Naive thymus-derived CD8-positive, alpha-beta T cell (primary cell): ENCODE measurements at regions of chr10 and their contacts with region 1.

Region 1: DNA sequence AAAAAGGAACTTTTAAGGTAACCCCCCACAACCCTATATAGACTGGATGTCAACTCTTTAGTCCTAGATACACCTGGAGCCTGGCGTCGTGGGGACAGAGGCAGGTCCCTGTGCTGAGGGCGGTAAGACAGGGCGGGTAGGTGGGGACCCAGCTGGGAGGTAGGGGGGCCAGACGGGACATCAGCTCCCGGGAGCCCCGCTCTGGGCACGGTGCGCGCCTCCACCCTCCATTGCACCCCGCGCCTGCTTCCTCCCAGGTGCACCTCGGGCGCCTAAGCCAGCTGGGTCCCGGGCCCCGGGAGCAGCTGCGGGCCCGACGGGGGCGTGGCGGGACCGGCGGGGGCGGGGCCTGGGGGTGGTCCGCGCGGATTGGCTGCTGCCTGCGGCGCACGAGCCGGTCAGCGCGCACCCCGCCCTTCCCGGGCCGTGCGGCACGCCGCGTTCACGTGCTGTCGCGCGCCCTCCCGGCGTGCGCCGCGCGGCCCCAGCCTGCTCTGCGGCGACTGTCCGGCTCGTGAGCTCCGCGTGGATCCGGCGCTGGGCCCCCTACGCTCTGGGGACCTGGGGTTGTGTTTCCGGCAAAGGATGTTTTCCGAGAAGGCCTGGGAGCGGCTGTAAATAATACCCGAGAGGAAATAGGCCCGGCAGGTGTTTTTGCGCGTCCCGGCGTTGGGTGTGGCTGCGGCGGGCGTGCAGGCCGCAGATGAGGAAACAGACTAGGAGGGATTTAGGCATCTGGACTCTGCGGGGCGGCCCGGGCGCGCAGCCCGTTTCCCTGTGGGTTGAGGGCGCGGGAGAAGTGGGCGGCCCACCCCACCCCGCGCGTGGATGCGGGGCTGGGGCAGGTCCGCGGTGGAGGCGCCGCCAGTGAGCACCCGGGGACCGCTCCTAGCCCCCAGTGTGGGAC is 39.1 kb upstream of the PFKFB3 start:
- DNase-seq: peak; percentile 85 to 94 (median 92)
- ATAC-seq: peak; percentile 85 to 93
- H3K4me3 Mint-ChIP-seq: peak overlapping the region; percentile 87 to 94 (median 92)
- H3K27ac Mint-ChIP-seq: peak overlapping the region; percentile 93 to 99 (median 97)
- H3K4me1 Mint-ChIP-seq: peaks cover 30 to 56% (median 50%) of the 10 kb centered on the region in 4 donors
- H3K27me3 Mint-ChIP-seq: no peaks in the 10 kb centered on the region

Region 2: DNA sequence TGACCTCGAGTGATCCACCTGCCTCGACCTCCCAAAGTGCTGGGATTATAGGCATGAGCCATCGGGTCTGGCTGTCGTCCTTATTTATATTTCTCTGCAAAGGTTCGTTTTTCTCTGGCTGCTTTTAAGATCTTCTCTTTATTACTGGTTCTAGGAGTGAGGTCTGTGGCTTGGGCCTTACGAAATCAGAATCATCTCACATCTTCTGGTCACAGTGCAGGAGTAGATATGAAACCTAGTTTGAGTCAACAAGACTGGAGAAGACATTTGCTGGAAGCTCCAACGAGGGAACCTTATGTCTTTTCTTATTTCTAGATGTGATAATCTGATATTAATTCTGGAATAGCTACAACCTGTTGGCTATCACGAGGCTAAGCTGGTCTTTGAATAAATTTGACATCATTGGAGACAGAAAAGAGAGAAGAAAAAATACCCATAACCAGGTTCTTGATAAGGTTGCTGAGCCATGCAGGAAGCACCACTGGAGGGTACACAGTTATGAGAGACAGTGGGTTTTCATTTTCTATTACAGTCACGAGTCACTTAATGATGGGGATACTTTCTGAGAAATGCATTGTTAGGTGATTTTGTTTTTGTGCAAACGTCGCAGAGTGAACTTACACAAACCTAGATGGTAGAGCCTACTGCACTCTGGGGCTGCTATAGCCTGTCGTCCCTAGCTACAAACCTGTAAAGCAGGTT is 160.7 kb before region 1 on chr10:
- POLR2A ChIA-PET with region 1: no interaction called
- DNase-seq: no peak
- ATAC-seq: no peak
- H3K4me3 Mint-ChIP-seq: no peak overlapping the region
- H3K27ac Mint-ChIP-seq: no peak overlapping the region
- H3K4me1 Mint-ChIP-seq: peaks cover 0 to 11% (median 3%) of the 10 kb centered on the region in 4 donors
- H3K27me3 Mint-ChIP-seq: peaks cover 0 to 27% (median 7%) of the 10 kb centered on the region in 5 donors

Region 3: GRCh38 chr10:6144406-6145165 is 19.0 kb before region 1 on chr10:
- POLR2A ChIA-PET with region 1: interaction called, 54 read pairs
- DNase-seq: peak; percentile 77 to 91 (median 86)
- ATAC-seq: peak; percentile 90 to 94
- H3K4me3 Mint-ChIP-seq: peak overlapping the region; percentile 80 to 92 (median 86)
- H3K27ac Mint-ChIP-seq: peak overlapping the region; percentile 83 to 93 (median 90)
- H3K4me1 Mint-ChIP-seq: peaks cover 25 to 64% (median 60%) of the 10 kb centered on the region in 4 donors
- H3K27me3 Mint-ChIP-seq: peaks cover 0 to 1% (median 0%) of the 10 kb centered on the region in 5 donors

Region 4: DNA sequence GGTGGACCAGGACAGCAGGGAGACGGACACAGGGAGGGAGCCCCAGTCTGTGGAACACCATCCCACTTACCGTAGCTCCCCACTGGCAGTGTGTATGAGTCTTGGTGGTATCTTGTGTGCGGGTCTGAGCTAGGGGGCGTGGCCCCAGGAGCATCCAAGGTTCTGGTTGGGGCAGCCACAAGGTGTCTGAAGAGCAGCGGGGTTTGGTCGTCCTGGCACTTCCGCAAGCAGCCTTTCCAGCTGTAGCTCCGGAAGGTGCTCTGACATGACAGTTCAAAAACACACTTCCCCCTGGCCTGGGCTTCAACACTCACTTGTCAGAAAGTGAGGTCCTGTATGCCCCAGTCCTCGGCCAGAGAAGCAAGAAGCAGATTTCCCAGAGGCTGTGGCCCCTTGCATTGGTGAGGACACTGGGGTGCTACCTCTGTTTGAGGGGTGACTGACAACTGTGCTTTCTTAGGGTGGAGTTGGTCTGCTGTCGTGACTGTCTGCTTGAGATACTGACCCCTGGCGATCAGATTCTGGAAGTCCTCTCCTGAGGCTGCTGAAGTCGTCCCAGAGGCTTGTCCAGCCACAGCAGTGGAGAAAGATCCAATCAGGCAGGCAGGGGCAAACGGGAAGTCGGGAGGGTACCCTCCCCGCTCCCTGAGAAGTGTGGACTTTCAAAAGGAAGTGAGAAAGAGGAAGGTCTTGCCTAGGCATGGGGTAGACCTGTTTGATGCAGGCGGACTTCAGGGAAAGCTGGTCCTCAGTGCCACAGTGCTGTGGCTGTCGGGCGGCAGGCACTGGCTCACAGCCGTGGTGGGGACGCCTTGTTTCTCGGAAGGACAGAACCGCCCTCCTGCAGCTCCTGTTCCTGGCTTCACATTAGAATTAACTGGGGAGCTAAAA is 12.3 kb before region 1 on chr10:
- POLR2A ChIA-PET with region 1: interaction called, 54 read pairs
- DNase-seq: peak in 9 of 10 donors; percentile 26 to 71 (median 48)
- ATAC-seq: peak; percentile 78 to 84
- H3K4me3 Mint-ChIP-seq: peak overlapping the region; percentile 67 to 84 (median 76)
- H3K27ac Mint-ChIP-seq: peak overlapping the region; percentile 64 to 92 (median 84)
- H3K4me1 Mint-ChIP-seq: peaks cover 37 to 67% (median 61%) of the 10 kb centered on the region in 4 donors
- H3K27me3 Mint-ChIP-seq: no peaks in the 10 kb centered on the region